ENCODE measurements at regions of chr22 and their contacts with region 1.

Region 1: DNA sequence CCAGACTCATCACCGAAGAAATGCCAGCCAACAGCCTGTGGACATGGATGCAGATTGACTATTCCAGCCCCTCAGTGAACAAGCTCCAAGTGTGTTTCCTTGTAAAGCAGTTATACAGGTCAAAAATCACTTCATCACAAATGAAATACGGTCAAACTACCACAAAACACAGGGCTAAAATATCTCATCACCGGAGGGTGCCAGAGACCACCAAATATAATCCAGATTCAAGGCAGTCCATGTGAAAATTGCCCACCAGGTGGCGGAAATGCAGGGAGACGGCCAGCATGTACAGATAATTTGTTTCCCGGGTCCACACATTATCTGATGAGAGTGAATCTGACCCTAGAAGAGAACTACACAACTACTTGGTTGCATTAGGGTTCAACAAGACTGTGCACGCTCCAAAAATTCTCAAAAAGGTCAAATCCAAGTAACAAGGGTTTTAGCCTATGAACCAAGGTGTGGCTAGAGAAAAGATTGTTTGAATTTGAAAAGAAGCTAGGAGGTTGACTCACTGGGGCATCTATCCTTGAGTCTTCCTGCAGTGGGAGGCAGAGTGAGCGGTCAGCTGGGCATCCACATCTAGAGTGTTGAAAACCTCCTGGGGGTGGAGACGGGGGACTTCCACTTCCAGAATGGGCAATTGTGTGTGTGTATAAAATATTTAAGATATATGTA is 71.7 kb downstream of the IGLL5 start:
- DNase-seq: peak; percentile 37 to 84 (median 64)
- ATAC-seq: peak; percentile 81
- H3K4me3 ChIP-seq: no peak overlapping the region
- H3K4me3 Mint-ChIP-seq: no peak overlapping the region
- H3K27ac ChIP-seq: no peak overlapping the region
- H3K27ac Mint-ChIP-seq: no peak overlapping the region
- H3K4me1 ChIP-seq: no peaks in the 10 kb centered on the region
- H3K4me1 Mint-ChIP-seq: peaks cover 0 to 10% (median 4%) of the 10 kb centered on the region in 7 donors
- H3K27me3 ChIP-seq: no peaks in the 10 kb centered on the region
- H3K27me3 Mint-ChIP-seq: peaks cover 8 to 44% (median 23%) of the 10 kb centered on the region in 5 donors

Region 2: DNA sequence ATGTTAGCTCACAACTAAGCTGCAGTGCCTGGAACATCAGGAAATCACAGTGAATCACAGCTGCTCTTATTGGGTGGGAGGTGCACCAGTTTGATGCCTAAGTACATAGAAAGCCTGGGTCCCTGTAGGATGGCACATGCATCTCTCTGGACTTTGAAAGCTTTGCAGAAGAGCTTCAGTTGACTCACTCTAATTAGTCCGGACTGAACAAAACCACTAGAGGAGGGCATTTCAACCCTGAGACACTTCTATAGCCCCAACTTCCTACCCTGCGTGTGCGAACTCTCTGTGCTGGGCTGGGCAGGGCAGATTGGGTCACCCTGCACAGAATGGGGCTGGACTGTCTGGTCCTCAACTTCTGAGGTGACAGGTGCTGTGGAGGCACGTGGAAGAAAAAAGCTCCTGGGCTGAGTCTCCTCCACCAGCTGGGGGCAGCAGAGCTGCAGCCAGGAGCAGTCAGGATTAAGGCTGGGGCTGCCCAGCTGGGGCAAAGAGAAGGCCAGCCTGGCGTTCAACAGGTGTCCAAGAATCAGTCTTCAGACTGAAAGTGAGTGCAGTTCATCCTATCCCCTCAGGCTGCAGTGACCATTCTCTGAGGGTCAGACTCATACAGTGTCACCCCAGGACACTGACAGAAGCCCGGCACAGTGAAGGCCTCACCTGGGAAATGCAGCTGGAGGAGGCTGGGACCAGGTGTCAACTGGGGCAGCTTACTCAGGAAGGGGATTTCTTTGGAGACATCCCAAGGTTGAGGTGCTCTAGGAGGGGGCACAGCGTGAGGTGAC is 292.8 kb before region 1 on chr22:
- CTCF ChIA-PET with region 1: no interaction called
- POLR2A ChIA-PET with region 1: no interaction called
- intact Hi-C with region 1: no loop called
- DNase-seq: no peak
- ATAC-seq: peak; percentile 52
- H3K4me3 ChIP-seq: no peak overlapping the region
- H3K4me3 Mint-ChIP-seq: no peak overlapping the region
- H3K27ac ChIP-seq: no peak overlapping the region
- H3K27ac Mint-ChIP-seq: peak overlapping the region in 1 of 9 donors; percentile 36
- H3K4me1 ChIP-seq: no peaks in the 10 kb centered on the region
- H3K4me1 Mint-ChIP-seq: no peaks in the 10 kb centered on the region
- H3K27me3 ChIP-seq: no peaks in the 10 kb centered on the region
- H3K27me3 Mint-ChIP-seq: peaks cover 0 to 16% (median 0%) of the 10 kb centered on the region in 5 donors

Region 3: DNA sequence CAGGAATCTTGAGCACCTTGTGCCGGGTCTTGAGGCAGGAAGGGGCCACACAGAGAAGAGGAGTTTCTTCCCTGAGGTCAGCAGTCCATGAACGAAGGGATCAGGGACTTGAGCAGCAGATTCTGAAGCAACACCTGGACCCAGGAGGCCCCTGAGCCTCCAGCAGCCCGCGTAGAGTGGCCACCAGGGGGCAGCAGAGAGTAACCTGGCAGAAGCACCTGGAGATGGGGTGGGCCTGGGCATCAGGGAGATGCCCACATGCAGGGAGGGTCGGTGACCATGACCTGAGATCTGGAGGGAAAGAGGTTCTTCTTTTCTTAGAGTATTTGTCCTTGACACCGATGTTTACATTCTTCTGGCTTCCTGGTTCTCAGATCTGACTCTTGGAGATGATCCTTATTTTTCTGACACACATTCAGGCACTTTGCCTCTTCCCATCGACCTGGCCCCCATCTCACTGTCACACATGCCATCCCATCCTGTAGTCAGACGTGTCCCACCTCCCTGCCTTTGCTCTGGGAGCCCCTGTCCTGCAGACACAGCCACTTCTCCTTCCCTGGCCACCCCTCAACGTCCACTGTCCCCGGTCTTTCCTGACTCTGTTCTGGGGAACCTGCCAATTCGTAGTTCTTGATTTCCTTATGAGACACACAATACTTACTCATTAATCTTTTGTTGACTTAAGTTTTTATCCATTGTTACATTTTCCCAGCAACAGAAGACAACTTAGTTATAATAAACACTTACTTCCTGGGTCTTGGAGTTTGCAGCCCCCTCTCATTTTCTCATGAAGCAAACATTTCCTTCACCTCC is 248.4 kb before region 1 on chr22:
- CTCF ChIA-PET with region 1: interaction called, 4 read pairs
- POLR2A ChIA-PET with region 1: no interaction called
- intact Hi-C with region 1: loop called in 1 of 2 experiments (anchors 1 kb)
- DNase-seq: peak; percentile 46 to 79 (median 64)
- ATAC-seq: peak; percentile 66
- H3K4me3 ChIP-seq: no peak overlapping the region
- H3K4me3 Mint-ChIP-seq: no peak overlapping the region
- H3K27ac ChIP-seq: no peak overlapping the region
- H3K27ac Mint-ChIP-seq: no peak overlapping the region
- H3K4me1 ChIP-seq: no peaks in the 10 kb centered on the region
- H3K4me1 Mint-ChIP-seq: peaks cover 0 to 3% (median 0%) of the 10 kb centered on the region in 7 donors
- H3K27me3 ChIP-seq: no peaks in the 10 kb centered on the region
- H3K27me3 Mint-ChIP-seq: peaks cover 0 to 6% (median 0%) of the 10 kb centered on the region in 5 donors

Region 4: DNA sequence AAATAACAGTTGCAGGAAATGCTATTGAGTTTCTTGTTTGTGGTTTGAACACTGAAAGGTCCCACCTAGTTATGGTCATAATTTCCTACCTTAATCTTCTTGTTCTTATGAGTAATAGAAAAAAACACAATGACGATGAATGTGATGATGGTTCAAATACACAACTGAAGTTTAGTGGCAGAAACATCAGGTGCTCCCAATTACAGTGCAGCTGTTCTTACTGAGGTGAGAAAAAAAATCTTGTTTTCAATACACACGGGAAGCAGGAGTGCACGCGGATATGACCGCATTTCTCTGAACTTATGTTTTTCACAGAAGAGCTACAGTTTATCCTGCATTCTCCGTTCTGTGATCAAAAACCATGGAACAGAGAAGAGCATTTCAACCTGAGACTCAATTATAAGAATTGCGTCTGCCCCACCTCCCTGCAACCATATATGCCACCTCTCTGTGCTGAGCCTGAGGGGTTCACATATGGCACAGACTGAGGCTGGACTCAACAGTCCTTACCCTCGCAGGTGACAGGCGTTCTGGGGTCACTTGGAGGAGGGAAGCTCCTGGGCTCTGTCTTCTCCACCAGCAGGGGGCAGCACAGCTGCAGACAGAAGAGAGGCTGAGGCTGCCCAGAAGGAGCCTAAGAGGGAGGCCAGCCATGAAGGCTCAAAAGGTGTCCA is 171.4 kb before region 1 on chr22:
- CTCF ChIA-PET with region 1: interaction called, 29 read pairs
- POLR2A ChIA-PET with region 1: no interaction called
- intact Hi-C with region 1: loop called (anchors 1 to 5 kb)
- DNase-seq: peak; percentile 33 to 72 (median 61)
- ATAC-seq: peak; percentile 82
- H3K4me3 ChIP-seq: no peak overlapping the region
- H3K4me3 Mint-ChIP-seq: peak overlapping the region in 1 of 10 donors; percentile 44
- H3K27ac ChIP-seq: no peak overlapping the region
- H3K27ac Mint-ChIP-seq: peak overlapping the region in 4 of 9 donors; percentile 8 to 48 (median 26)
- H3K4me1 ChIP-seq: peaks cover 10 to 56% of the 10 kb centered on the region in 2 donors
- H3K4me1 Mint-ChIP-seq: peaks cover 12 to 44% (median 26%) of the 10 kb centered on the region in 7 donors
- H3K27me3 ChIP-seq: no peaks in the 10 kb centered on the region
- H3K27me3 Mint-ChIP-seq: peaks cover 0 to 13% (median 0%) of the 10 kb centered on the region in 5 donors

Region 5: DNA sequence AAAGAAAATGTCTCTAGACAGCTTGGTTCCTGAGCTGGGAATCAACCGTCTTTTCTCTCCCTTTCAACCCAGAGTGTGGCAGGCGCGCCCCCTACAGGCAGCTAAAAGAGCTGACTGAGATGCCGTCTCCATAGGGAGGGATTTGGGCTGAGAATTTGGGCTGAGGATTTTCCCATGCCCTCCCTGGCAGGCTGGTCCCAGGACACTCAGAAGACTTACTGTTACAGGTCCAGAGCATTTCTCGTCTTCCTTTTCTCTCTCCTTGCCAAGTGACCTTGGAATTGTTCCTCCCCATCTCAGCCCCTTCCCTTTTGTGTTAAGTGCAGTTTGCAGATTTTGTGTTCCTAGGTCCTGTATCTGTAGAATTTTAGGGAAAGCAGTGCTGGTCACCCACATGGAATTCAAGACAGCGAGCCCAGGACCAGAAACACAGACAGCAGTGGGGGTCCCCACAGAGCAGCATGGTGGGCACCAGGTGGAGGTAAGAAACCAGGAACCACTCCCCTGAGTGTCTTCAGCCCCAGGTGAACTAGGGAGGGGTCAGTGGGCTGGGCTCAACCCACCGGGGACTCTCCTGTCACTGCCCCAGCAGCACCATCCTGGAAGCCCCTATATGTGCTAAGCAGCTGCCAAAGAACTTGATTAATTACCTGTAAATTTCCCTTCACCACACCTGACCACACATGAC is 81.6 kb before region 1 on chr22:
- CTCF ChIA-PET with region 1: interaction called, 5 read pairs
- POLR2A ChIA-PET with region 1: no interaction called
- intact Hi-C with region 1: loop called (anchors 5 kb)
- DNase-seq: peak; percentile 43 to 80 (median 72)
- ATAC-seq: peak; percentile 67
- H3K4me3 ChIP-seq: no peak overlapping the region
- H3K4me3 Mint-ChIP-seq: no peak overlapping the region
- H3K27ac ChIP-seq: no peak overlapping the region
- H3K27ac Mint-ChIP-seq: peak overlapping the region in 3 of 9 donors; percentile 36 to 42 (median 40)
- H3K4me1 ChIP-seq: no peaks in the 10 kb centered on the region
- H3K4me1 Mint-ChIP-seq: peaks cover 0 to 4% (median 3%) of the 10 kb centered on the region in 7 donors
- H3K27me3 ChIP-seq: no peaks in the 10 kb centered on the region
- H3K27me3 Mint-ChIP-seq: peaks cover 0 to 48% (median 0%) of the 10 kb centered on the region in 5 donors

Region 6: GRCh38 chr22:23178512-23179254 is 219.4 kb after region 1 on chr22:
- CTCF ChIA-PET with region 1: interaction called, 5 read pairs
- POLR2A ChIA-PET with region 1: no interaction called
- intact Hi-C with region 1: loop called in 1 of 2 experiments (anchors 1 kb)
- DNase-seq: peak in 8 of 9 donors; percentile 38 to 76 (median 62)
- ATAC-seq: peak; percentile 54
- H3K4me3 ChIP-seq: no peak overlapping the region
- H3K4me3 Mint-ChIP-seq: peak overlapping the region; percentile 70 to 90 (median 80)
- H3K27ac ChIP-seq: no peak overlapping the region
- H3K27ac Mint-ChIP-seq: peak overlapping the region; percentile 56 to 95 (median 82)
- H3K4me1 ChIP-seq: peaks cover 22 to 39% of the 10 kb centered on the region in 2 donors
- H3K4me1 Mint-ChIP-seq: peaks cover 43 to 57% (median 51%) of the 10 kb centered on the region in 7 donors
- H3K27me3 ChIP-seq: no peaks in the 10 kb centered on the region
- H3K27me3 Mint-ChIP-seq: peaks cover 0 to 2% (median 0%) of the 10 kb centered on the region in 5 donors

Region 7: DNA sequence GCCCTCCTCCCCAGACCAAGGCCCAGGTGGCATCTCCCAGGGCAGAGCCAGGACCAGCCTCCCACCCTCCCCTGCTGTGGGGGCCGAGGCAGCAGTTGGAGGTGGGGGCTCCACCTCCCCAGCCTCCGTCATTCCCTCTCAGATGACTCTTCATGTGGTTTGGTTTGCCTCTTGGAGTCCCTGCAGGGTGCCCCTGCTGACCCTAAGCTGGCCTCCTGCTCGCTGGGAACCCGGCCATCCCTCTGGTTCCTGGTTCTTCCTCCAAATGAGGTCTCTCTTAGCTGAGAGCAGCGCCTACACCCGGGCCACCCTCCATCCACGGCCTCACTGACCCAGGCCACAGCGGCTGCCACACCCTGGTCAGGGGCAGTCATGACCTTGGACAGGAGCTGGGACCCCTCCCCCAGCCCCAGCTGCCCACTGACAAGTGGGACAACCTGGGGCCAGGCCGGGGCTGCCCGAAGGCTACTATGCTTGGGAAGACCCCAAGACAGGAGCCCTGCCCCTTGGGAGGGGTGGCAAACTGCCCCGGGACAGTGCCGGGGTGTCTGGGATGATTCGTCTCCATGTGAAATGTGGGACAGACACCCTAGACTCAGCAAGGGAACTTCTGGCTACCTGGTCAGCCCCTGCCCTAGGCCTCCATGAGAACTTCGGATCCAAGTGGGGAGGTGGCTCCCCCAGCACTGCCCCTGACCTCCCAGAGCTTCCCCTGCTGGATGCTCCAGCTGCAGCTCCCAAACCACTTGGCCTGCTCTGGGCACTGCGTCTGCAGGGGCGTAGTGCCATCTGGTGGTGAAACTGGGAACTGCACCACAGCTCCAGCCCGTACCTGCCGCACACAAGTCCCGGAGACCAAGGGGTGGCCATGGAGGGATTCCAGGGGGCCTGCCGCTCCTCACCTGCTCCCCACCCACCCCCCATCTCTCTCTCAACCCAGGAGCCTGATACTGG is 426.3 kb after region 1 on chr22:
- CTCF ChIA-PET with region 1: interaction called, 22 read pairs
- POLR2A ChIA-PET with region 1: no interaction called
- intact Hi-C with region 1: loop called in 1 of 2 experiments (anchors 5 kb)
- DNase-seq: peak; percentile 48 to 84 (median 71)
- ATAC-seq: peak; percentile 84
- H3K4me3 ChIP-seq: no peak overlapping the region
- H3K4me3 Mint-ChIP-seq: no peak overlapping the region
- H3K27ac ChIP-seq: no peak overlapping the region
- H3K27ac Mint-ChIP-seq: no peak overlapping the region
- H3K4me1 ChIP-seq: no peaks in the 10 kb centered on the region
- H3K4me1 Mint-ChIP-seq: no peaks in the 10 kb centered on the region
- H3K27me3 ChIP-seq: no peaks in the 10 kb centered on the region
- H3K27me3 Mint-ChIP-seq: no peaks in the 10 kb centered on the region